Activated naive CD4-positive, alpha-beta T cell treated with anti-CD3 and anti-CD28 coated beads for 36 hours (primary cell): ENCODE measurements at regions of chr12 and their contacts with region 1.

Region 1: GRCh38 chr12:92987362-92987761 is 58.3 kb upstream of the EEA1 start:
- DNase-seq: no peak
- H3K4me3 Mint-ChIP-seq: peak overlapping the region; percentile 26
- H3K27ac Mint-ChIP-seq: peak overlapping the region; percentile 78
- H3K4me1 Mint-ChIP-seq: peaks cover 26% of the 10 kb centered on the region
- H3K27me3 Mint-ChIP-seq: no peaks in the 10 kb centered on the region

Region 2: GRCh38 chr12:92784795-92785562 is 202.4 kb before region 1 on chr12:
- CTCF ChIA-PET with region 1: interaction called, 7 read pairs
- intact Hi-C with region 1: loop called (anchors 1 kb)
- DNase-seq: peak; percentile 35
- H3K4me3 Mint-ChIP-seq: no peak overlapping the region
- H3K27ac Mint-ChIP-seq: no peak overlapping the region
- H3K4me1 Mint-ChIP-seq: peaks cover 2% of the 10 kb centered on the region
- H3K27me3 Mint-ChIP-seq: no peaks in the 10 kb centered on the region

Region 3: DNA sequence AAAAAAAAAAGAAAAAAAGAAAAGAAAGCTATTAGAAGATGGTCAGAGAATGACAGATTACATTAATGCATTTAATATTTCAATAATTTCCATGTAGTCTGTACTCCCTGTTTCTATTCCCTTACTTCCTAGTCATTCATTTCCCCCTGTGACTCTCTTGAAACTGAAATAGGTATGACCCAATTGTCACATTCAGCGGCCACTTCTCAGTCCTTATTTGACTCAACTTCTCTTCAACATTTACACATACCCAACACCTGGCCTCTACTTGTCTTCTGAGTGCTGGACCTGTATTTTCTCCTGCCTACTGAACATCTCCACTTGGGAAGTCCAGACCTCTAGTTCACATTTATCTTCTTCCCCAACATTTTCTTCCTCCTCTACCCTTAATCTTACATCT is 65.5 kb before region 1 on chr12:
- CTCF ChIA-PET with region 1: no interaction called
- intact Hi-C with region 1: no loop called
- DNase-seq: peak; percentile 52
- H3K4me3 Mint-ChIP-seq: no peak overlapping the region
- H3K27ac Mint-ChIP-seq: no peak overlapping the region
- H3K4me1 Mint-ChIP-seq: peaks cover 23% of the 10 kb centered on the region
- H3K27me3 Mint-ChIP-seq: no peaks in the 10 kb centered on the region

Region 4: GRCh38 chr12:93008044-93008778 is 20.8 kb after region 1 on chr12:
- CTCF ChIA-PET with region 1: interaction called, 11 read pairs
- intact Hi-C with region 1: no loop called
- DNase-seq: no peak
- H3K4me3 Mint-ChIP-seq: no peak overlapping the region
- H3K27ac Mint-ChIP-seq: no peak overlapping the region
- H3K4me1 Mint-ChIP-seq: peaks cover 8% of the 10 kb centered on the region
- H3K27me3 Mint-ChIP-seq: no peaks in the 10 kb centered on the region

Region 5: DNA sequence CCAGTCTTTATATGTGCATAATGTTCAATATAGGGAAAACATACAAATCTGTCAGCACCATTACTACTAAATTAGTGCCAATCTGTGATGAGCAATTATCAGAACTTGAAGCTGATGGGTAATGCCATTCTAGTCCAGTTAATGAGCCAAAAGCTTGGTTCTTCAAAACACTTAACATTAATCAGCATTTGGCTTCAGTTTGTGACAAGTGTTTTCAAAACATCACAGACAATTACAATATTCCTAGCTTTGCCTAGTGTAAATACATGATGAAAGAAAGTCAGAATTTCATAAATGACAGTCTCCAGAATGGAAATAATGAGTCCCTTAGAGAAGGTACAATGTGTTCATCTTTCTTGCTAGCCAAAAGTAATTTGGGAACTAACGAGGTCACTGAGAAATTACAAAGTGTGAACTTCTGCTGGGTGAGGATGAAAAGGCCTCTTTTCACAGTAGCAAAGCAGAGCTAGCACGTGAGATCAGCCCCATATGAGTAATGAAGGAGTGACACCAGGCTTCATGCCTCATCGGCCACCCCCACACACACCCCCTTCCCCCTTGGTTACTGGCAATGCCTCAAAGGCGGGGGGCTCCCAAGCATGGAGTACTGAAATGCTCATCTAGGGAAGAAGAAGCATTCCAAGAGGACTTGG is 122.3 kb after region 1 on chr12:
- CTCF ChIA-PET with region 1: interaction called, 3 read pairs
- intact Hi-C with region 1: loop called (anchors 1 kb)
- DNase-seq: peak; percentile 83
- H3K4me3 Mint-ChIP-seq: no peak overlapping the region
- H3K27ac Mint-ChIP-seq: peak overlapping the region; percentile 91
- H3K4me1 Mint-ChIP-seq: peaks cover 32% of the 10 kb centered on the region
- H3K27me3 Mint-ChIP-seq: no peaks in the 10 kb centered on the region

Region 6: GRCh38 chr12:93279565-93280412 is 292.4 kb after region 1 on chr12:
- CTCF ChIA-PET with region 1: no interaction called
- intact Hi-C with region 1: no loop called
- DNase-seq: no peak
- H3K4me3 Mint-ChIP-seq: no peak overlapping the region
- H3K27ac Mint-ChIP-seq: no peak overlapping the region
- H3K4me1 Mint-ChIP-seq: no peaks in the 10 kb centered on the region
- H3K27me3 Mint-ChIP-seq: no peaks in the 10 kb centered on the region

Region 7: GRCh38 chr12:93378373-93379325 is 391.3 kb after region 1 on chr12:
- CTCF ChIA-PET with region 1: interaction called, 14 read pairs
- intact Hi-C with region 1: loop called (anchors 1 kb)
- DNase-seq: peak; percentile 74
- H3K4me3 Mint-ChIP-seq: peak overlapping the region; percentile 99
- H3K27ac Mint-ChIP-seq: peak overlapping the region; percentile 99
- H3K4me1 Mint-ChIP-seq: peaks cover 38% of the 10 kb centered on the region
- H3K27me3 Mint-ChIP-seq: no peaks in the 10 kb centered on the region

Region 8: GRCh38 chr12:93467351-93468007 is 480.1 kb after region 1 on chr12 and contains the start of gene MRPL42:
- CTCF ChIA-PET with region 1: no interaction called
- intact Hi-C with region 1: loop called (anchors 1 kb)
- DNase-seq: peak; percentile 95
- H3K4me3 Mint-ChIP-seq: peak within 1 kb of the TSS; percentile 95
- H3K27ac Mint-ChIP-seq: peak within 1 kb of the TSS; percentile 91
- H3K4me1 Mint-ChIP-seq: peaks cover 32% of the 10 kb centered on the region
- H3K27me3 Mint-ChIP-seq: no peaks in the 10 kb centered on the region
- total RNA-seq, gene MRPL42: 93.8 to 95.8 TPM

Region 9: GRCh38 chr12:93979189-93979588 is 991.8 kb after region 1 on chr12:
- CTCF ChIA-PET with region 1: no interaction called
- intact Hi-C with region 1: loop called (anchors 1 kb)
- DNase-seq: peak; percentile 53
- H3K4me3 Mint-ChIP-seq: no peak overlapping the region
- H3K27ac Mint-ChIP-seq: no peak overlapping the region
- H3K4me1 Mint-ChIP-seq: peaks cover 27% of the 10 kb centered on the region
- H3K27me3 Mint-ChIP-seq: no peaks in the 10 kb centered on the region